ENCODE measurements at regions of chr20 and their contacts with region 1.

Region 1: GRCh38 chr20:10603971-10604864 is 69.6 kb downstream of the JAG1 start:
- DNase-seq: peak; percentile 63 to 84
- H3K4me3 ChIP-seq: no peak overlapping the region
- H3K27ac ChIP-seq: peak overlapping the region; percentile 87
- H3K4me1 ChIP-seq: peaks cover 34% of the 10 kb centered on the region
- H3K27me3 ChIP-seq: no peaks in the 10 kb centered on the region
- CTCF ChIP-seq: no peak

Region 2: DNA sequence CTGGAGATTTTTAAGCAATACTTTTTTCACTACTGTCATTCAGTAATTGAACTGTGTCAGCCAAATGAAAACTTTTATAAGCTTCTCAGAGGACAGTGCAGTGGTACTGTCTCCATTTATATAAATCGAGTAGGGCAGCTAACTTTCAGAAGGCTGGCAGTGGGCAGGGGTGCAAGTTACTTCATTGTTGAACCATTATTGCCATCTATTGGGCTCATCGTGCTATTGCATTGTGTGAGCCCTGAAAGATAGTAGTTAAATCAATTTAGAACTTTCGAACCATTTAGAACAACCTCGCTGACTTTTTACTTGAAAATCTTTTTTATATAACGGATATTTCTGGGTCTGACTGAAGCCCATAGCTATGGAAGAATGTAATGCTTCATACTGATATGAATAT is 1883.1 kb before region 1 on chr20:
- CTCF ChIA-PET with region 1: no interaction called
- POLR2A ChIA-PET with region 1: no interaction called
- intact Hi-C with region 1: no loop called
- DNase-seq: no peak
- H3K4me3 ChIP-seq: no peak overlapping the region
- H3K27ac ChIP-seq: no peak overlapping the region
- H3K4me1 ChIP-seq: no peaks in the 10 kb centered on the region
- H3K27me3 ChIP-seq: peaks cover 22% of the 10 kb centered on the region; the same call in 1 of the 2 replicates
- CTCF ChIP-seq: peak; percentile 75

Region 3: DNA sequence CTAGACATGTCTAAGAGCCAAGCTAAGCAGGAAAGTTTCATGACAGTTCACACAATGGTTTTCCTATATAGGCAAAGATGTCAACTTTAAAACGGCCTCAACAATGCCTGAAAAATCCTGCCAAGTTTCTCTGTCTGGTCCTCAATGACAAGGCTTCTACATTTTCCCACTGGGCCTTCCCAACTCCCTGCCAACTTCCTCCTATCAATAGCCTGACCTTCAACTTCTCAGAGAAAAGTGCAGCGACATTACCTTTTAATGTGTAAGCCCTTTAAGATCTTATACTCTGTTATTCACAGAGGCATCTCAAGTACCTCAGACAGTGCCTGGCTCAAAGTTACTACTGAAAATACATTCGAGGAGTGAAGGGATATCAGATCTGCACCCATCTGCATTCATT is 1257.3 kb after region 1 on chr20:
- CTCF ChIA-PET with region 1: no interaction called
- POLR2A ChIA-PET with region 1: no interaction called
- intact Hi-C with region 1: loop called (anchors 5 kb)
- DNase-seq: no peak
- H3K4me3 ChIP-seq: no peak overlapping the region
- H3K27ac ChIP-seq: no peak overlapping the region
- H3K4me1 ChIP-seq: no peaks in the 10 kb centered on the region
- H3K27me3 ChIP-seq: no peaks in the 10 kb centered on the region
- CTCF ChIP-seq: no peak

Measured in PC-9 (cell line).